Activated CD8-positive, alpha-beta memory T cell treated with anti-CD3 and anti-CD28 coated beads, Interleukin-2, amount 10 ng/mL, durations not matched to agents 7 days and 5 days (primary cell): ENCODE measurements at regions of chr19 and their contacts with region 1.

Region 1: DNA sequence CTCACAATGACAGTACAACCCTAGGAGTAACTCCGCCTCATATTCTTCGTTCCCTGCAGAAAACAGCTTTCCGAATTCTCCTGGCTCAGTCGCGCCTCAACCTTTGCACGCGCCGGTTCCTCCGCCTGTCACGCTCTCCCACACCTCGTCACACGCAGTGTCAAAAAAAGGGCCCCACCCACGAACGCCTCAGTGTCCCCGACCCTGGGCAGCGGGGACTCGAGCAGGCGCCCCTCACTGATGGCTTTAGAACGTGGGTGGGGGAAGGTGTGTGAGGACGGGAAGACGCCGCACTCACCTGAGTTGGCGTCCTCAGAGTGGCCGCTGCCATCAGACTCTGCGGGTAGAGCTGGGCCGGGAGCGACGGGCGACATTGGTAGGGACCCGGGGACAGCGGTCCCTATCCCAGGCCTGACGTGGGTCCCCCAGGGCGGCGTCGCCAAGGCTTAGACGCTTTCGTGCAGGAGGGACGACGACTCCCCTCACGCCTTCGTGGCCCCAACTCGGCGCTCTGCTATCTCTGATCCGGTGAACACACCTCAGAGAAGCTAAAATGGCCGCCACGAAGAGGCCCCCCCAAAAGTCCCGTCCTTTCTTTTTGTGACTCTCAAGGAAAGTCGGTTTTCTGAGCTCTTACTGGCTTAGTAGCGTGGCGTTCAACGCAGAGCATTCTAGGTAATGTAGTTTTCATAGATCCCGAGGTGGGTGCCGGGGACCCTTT is at the start of gene ZNF154:
- DNase-seq: peak; percentile 70
- ATAC-seq: peak; percentile 83
- H3K4me3 Mint-ChIP-seq: peak within 1 kb of the TSS; percentile 79
- H3K27ac Mint-ChIP-seq: peak within 1 kb of the TSS; percentile 85
- H3K4me1 Mint-ChIP-seq: peaks cover 26% of the 10 kb centered on the region
- H3K27me3 Mint-ChIP-seq: peaks cover 3% of the 10 kb centered on the region
- total RNA-seq, gene ZNF154: 4.0 to 5.6 TPM

Region 2: DNA sequence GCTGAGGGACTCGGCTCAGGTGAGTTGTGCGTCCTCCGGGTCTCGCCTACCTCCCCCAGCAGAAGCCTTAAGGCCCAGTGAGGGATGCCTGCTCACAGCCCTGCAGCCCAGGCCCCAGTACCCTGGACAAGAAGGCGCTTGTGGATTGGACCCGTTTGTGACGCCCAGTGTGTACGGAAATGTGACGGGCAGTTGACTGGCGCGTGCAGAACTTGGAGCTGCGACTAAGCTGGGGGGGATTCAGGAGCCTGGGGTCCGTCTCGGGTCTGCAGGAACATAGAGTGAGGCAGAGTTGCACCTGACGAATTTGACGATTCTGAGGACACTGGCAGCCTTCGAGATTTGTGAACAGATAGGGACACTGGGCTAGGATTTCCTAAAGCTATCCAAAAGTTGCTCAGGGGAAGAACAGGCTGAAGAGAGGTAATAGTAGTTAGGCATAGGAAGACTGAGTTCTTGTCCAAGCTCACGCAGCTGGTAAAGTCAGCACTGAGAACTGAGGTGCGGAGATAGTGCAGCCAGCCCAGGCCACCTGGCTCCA is 26.5 kb before region 1 on chr19:
- CTCF ChIA-PET with region 1: interaction called, 14 read pairs
- DNase-seq: no peak
- ATAC-seq: no peak
- H3K4me3 Mint-ChIP-seq: peak overlapping the region; percentile 95
- H3K27ac Mint-ChIP-seq: peak overlapping the region; percentile 90
- H3K4me1 Mint-ChIP-seq: peaks cover 30% of the 10 kb centered on the region
- H3K27me3 Mint-ChIP-seq: no peaks in the 10 kb centered on the region

Region 3: DNA sequence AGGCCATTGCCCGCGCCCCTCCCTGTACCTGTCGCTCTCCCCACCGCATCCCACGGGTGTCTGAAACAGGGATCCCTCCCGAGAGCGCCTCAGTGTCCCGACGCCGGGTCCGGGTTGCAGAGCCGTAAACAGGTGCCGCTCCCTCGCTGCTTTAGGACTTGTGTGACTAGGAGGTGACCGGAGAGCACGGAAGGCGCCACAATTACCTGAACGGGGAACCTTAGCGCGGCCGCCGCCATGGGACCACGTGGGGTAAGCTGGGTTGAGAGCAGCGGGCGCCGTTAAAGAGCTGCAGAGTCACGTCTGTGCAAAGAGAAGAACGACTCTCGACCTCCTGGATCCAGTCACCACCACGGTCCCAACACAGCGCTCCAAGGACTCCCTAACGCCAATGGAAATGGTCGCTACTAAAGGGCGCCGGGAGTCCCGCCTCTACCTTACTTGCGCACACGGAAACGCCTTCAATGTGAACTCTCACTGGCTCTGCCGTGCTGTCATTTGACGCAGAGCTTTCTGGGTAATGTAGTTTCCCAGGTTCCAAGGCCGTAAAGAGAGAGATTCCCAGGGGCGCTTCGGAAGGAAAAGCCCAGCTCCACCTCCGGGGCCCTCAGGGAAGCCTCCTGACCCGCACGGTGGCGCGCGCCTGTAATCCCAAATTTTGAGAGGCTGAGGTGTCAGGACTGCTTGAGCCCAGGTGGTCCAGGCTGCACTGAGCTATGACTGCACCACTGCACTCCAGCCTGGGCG is 105.9 kb after region 1 on chr19 and contains the start of gene ZNF552:
- CTCF ChIA-PET with region 1: no interaction called
- DNase-seq: peak; percentile 87
- ATAC-seq: peak; percentile 85
- H3K4me3 Mint-ChIP-seq: peak within 1 kb of the TSS; percentile 90
- H3K27ac Mint-ChIP-seq: peak within 1 kb of the TSS; percentile 88
- H3K4me1 Mint-ChIP-seq: peaks cover 40% of the 10 kb centered on the region
- H3K27me3 Mint-ChIP-seq: no peaks in the 10 kb centered on the region
- total RNA-seq, gene ZNF552: 9.7 to 11.1 TPM